ENCODE measurements at regions of chr2 and their contacts with region 1.

Region 1: GRCh38 chr2:32553829-32554432 is 73.9 kb upstream of the TTC27 start:
- DNase-seq: peak; percentile 38 to 69 (median 66)
- H3K4me3 ChIP-seq: no peak overlapping the region
- H3K4me3 Mint-ChIP-seq: no peak overlapping the region
- H3K27ac ChIP-seq: peak overlapping the region in 1 of 2 donors; percentile 68
- H3K27ac Mint-ChIP-seq: peak overlapping the region in 5 of 7 donors; percentile 60 to 92 (median 86)
- H3K4me1 ChIP-seq: peaks cover 6 to 14% of the 10 kb centered on the region in 2 donors
- H3K4me1 Mint-ChIP-seq: peaks cover 6% of the 10 kb centered on the region
- H3K27me3 ChIP-seq: no peaks in the 10 kb centered on the region
- H3K27me3 Mint-ChIP-seq: no peaks in the 10 kb centered on the region
- CTCF ChIP-seq: peak; percentile 87

Region 2: GRCh38 chr2:32168513-32168912 is 385.4 kb before region 1 on chr2:
- intact Hi-C with region 1: no loop called
- DNase-seq: no peak
- H3K4me3 ChIP-seq: no peak overlapping the region
- H3K4me3 Mint-ChIP-seq: no peak overlapping the region
- H3K27ac ChIP-seq: no peak overlapping the region
- H3K27ac Mint-ChIP-seq: no peak overlapping the region
- H3K4me1 ChIP-seq: peaks cover 9 to 15% of the 10 kb centered on the region in 2 donors
- H3K4me1 Mint-ChIP-seq: peaks cover 20% of the 10 kb centered on the region
- H3K27me3 ChIP-seq: no peaks in the 10 kb centered on the region
- H3K27me3 Mint-ChIP-seq: peaks cover 0 to 1% (median 0%) of the 10 kb centered on the region in 3 donors
- CTCF ChIP-seq: no peak

Region 3: GRCh38 chr2:32402091-32402490 is 151.8 kb before region 1 on chr2:
- intact Hi-C with region 1: no loop called
- DNase-seq: no peak
- H3K4me3 ChIP-seq: no peak overlapping the region
- H3K4me3 Mint-ChIP-seq: no peak overlapping the region
- H3K27ac ChIP-seq: no peak overlapping the region
- H3K27ac Mint-ChIP-seq: peak overlapping the region in 3 of 7 donors; percentile 9 to 63 (median 25)
- H3K4me1 ChIP-seq: no peaks in the 10 kb centered on the region
- H3K4me1 Mint-ChIP-seq: no peaks in the 10 kb centered on the region
- H3K27me3 ChIP-seq: no peaks in the 10 kb centered on the region
- H3K27me3 Mint-ChIP-seq: no peaks in the 10 kb centered on the region
- CTCF ChIP-seq: no peak

Region 4: GRCh38 chr2:32946314-32947075 is 392.6 kb after region 1 on chr2 and contains the start of gene LTBP1:
- intact Hi-C with region 1: loop called in 1 of 2 experiments (anchors 10 kb)
- DNase-seq: peak; percentile 23 to 59 (median 35)
- H3K4me3 ChIP-seq: peak within 1 kb of the TSS; percentile 25 to 80 (median 48)
- H3K4me3 Mint-ChIP-seq: peak within 1 kb of the TSS; percentile 79 to 92
- H3K27ac ChIP-seq: no peak within 1 kb of the TSS
- H3K27ac Mint-ChIP-seq: no peak within 1 kb of the TSS
- H3K4me1 ChIP-seq: peaks cover 6 to 27% of the 10 kb centered on the region in 2 donors
- H3K4me1 Mint-ChIP-seq: peaks cover 18% of the 10 kb centered on the region
- H3K27me3 ChIP-seq: peaks cover 39 to 57% of the 10 kb centered on the region in 2 donors
- H3K27me3 Mint-ChIP-seq: peaks cover 48 to 75% (median 63%) of the 10 kb centered on the region in 3 donors
- CTCF ChIP-seq: peak; percentile 69
- polyA plus RNA-seq, gene LTBP1: 0.18 to 0.24 TPM in 2 of 3 donors, not detected in the other

Measured in CD14-positive monocyte (primary cell).